Dorsolateral prefrontal cortex (tissue), 120 donors: ENCODE measurements at regions of chr11 and their contacts with region 1.

Region 1: GRCh38 chr11:70202898-70203748 is at the start of gene FADD:
- DNase-seq: peak; percentile 71 to 92 (median 84)
- H3K4me3 ChIP-seq: peak within 1 kb of the TSS; percentile 67 to 100 (median 91)
- H3K27ac ChIP-seq: peak within 1 kb of the TSS; percentile 29 to 94 (median 85)
- H3K27me3 ChIP-seq: no peaks in the 10 kb centered on the region
- CTCF ChIP-seq: peak in 30 of 56 donors; percentile 5 to 66 (median 30)
- total RNA-seq, gene FADD: 8.6 to 18.8 (median 12.1) TPM

Region 2: DNA sequence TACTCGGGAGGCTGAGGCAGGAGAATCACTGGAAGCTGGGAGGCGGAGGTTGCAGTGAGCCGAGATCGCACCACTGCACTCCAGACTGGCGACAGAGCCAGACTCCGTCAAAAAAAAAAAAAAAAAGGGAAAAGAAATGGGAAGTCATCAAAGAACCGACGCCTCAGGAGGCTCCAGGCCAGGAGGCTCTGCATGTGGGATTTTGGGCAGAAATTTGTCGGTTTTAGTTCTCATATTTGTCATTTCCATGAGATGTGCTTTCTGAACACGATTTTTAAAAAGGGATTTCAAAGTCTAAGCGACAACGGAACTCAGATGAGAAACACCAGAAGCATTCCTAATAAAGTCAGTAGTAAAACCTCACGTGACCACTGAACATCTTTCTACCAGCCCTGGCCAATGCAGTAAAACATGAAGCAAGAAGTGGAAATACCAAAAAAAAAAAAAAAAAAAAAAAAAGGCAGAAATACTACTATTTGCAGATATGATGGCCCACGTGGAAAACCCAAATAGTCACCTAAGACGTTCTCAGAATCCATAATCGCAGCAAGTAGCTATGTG is 527.2 kb before region 1 on chr11:
- intact Hi-C with region 1: loop called (anchors 5 kb)
- DNase-seq: no peak
- H3K4me3 ChIP-seq: peak overlapping the region; percentile 61 to 100 (median 98)
- H3K27ac ChIP-seq: peak overlapping the region in 14 of 59 donors; percentile 18 to 94 (median 83)
- H3K27me3 ChIP-seq: no peaks in the 10 kb centered on the region
- CTCF ChIP-seq: no peak

Region 3: DNA sequence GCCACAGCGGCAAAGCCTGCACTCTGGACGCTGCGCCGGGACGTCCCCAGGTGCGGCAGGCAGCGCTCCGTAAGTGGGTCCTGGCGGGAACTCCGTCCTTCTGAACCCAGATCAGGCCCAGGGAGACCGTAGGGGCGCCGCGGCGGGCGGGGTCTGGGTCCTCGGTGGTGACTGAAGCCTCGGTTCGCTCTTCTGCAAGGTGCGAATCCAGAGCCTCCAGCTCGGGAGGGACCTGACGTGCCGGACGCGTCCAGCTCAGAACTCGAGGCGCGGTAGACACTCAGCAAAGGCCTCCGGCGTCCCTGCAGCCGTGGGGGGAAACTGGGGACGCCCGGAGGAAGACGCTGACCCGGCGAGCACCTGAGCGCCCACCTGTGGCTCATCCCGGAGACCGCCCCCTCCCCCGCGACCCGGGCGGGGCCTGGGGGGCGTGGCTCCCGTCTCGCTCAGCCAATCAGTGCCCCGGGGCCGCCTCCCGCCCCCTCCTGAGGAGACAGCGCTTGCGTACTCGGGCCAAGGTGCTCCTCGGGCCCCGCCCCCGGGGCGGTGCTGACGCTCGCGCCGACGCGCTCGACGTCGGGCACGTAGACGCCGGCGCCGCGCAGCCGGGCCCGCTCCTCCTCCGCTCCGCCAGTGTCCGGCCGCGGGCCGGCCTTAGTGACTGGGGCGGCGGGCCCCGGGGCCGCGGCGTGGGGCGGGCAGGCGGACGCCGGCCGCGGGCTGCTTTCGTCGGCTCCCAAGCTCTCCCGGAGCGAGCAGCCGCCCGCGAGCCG is 67.2 kb after region 1 on chr11 and contains the start of gene PPFIA1:
- intact Hi-C with region 1: loop called (anchors 2 to 5 kb)
- DNase-seq: peak; percentile 87 to 98 (median 94)
- H3K4me3 ChIP-seq: peak within 1 kb of the TSS; percentile 55 to 100 (median 92)
- H3K27ac ChIP-seq: peak within 1 kb of the TSS in 51 of 59 donors; percentile 5 to 90 (median 72)
- H3K27me3 ChIP-seq: no peaks in the 10 kb centered on the region
- CTCF ChIP-seq: peak in 13 of 56 donors; percentile 7 to 37 (median 19)
- total RNA-seq, gene PPFIA1: 65.9 to 132 (median 94.2) TPM

Region 4: DNA sequence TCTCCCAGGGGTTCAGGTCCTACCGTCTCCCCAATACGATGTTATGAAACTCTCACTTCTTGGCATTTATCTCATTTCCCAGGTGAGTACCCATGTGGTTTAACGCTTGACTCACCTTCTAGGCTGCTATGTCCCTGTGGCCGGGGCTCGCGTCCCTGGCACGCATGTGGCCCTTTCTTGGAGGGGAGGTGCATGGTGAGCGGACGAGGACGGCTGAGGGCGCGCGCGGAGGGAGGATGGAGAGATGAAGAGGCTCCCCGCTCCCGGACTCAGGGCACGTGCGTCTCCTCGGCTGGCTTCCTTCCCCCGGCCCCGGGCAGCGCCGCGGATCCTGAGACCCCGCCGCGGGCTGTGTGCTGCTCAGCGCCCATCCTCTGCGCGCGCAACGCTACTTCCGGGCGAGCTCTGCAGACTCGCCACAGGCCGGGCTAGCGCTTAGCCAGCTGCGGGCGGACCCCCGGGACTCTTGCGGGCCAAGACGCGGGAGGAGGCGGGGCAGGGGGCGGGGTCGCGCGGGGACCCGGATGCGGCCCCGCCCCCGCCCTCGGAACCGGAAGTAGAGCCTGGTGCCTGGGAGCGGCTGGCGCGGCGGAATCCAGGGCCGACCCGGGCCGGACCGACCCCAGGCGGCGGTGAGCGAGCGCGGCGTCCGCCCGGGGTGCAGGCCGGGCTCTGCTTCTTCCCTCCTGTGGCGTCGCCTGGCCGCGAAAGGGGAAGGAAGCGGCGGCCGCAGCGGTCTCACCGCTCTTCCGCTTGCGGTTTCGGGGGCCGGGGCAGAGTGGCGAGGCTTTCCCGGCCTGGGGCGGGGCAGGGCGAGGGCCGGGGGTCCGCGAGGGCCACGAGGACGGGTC is 195.1 kb after region 1 on chr11 and contains the start of gene CTTN:
- intact Hi-C with region 1: loop called in 1 of 2 experiments (anchors 10 kb)
- DNase-seq: peak; percentile 68 to 88 (median 77)
- H3K4me3 ChIP-seq: peak within 1 kb of the TSS; percentile 59 to 96 (median 87)
- H3K27ac ChIP-seq: peak within 1 kb of the TSS in 57 of 59 donors; percentile 32 to 92 (median 77)
- H3K27me3 ChIP-seq: no peaks in the 10 kb centered on the region
- CTCF ChIP-seq: peak in 18 of 56 donors; percentile 5 to 49 (median 16)
- total RNA-seq, gene CTTN: 183 to 372 (median 269) TPM

Region 5: GRCh38 chr11:71453037-71453898 is 1250.1 kb after region 1 on chr11 and contains the start of gene NADSYN1:
- intact Hi-C with region 1: loop called in 1 of 2 experiments (anchors 10 kb)
- DNase-seq: peak; percentile 95 to 98 (median 96)
- H3K4me3 ChIP-seq: peak within 1 kb of the TSS; percentile 71 to 100 (median 94)
- H3K27ac ChIP-seq: peak within 1 kb of the TSS; percentile 38 to 97 (median 91)
- H3K27me3 ChIP-seq: no peaks in the 10 kb centered on the region
- CTCF ChIP-seq: peak in 17 of 56 donors; percentile 3 to 39 (median 21)
- total RNA-seq, gene NADSYN1: 44.1 to 151 (median 75.1) TPM